Activated T-helper 2 cell treated with anti-CD3 and anti-CD28 coated beads, Interferon-gamma antibody, Interleukin-2, Interleukin-4, amounts not matched to agents 10 μg/mL and 5 μg/mL and 100 μg/mL, durations not matched to agents 14 hours and 24 hours and 36 hours (primary cell): ENCODE measurements at regions of chr3 and their contacts with region 1.

Region 1: GRCh38 chr3:187919048-187919447 is 173.8 kb upstream of the BCL6 start:
- DNase-seq: peak; percentile 71
- H3K4me3 Mint-ChIP-seq: peak overlapping the region; percentile 63
- H3K27ac Mint-ChIP-seq: peak overlapping the region; percentile 90
- H3K4me1 Mint-ChIP-seq: peaks cover 72% of the 10 kb centered on the region
- H3K27me3 Mint-ChIP-seq: peaks cover 3% of the 10 kb centered on the region

Region 2: GRCh38 chr3:187802928-187803259 is 116.2 kb before region 1 on chr3:
- intact Hi-C with region 1: loop called (anchors 1 kb)
- DNase-seq: peak; percentile 80
- H3K4me3 Mint-ChIP-seq: peak overlapping the region; percentile 54
- H3K27ac Mint-ChIP-seq: peak overlapping the region; percentile 87
- H3K4me1 Mint-ChIP-seq: peaks cover 90% of the 10 kb centered on the region
- H3K27me3 Mint-ChIP-seq: no peaks in the 10 kb centered on the region

Region 3: DNA sequence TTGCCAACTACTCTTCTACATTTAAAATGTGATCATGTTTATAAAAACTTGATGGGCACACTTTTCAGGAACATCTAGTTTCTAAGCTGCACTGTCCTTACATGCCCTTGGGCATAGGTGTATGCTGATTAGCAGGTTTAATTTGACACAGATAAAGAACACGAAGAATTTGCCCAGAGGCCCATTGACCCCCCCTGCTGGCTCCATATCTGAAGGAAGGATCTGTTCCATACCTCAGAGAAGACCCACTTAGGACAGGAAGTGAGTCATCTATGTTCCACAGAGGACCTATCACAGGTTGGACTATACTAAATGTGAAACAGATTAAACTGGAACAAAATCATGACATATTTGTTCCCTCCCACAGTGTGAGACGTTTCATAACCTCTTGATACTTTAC is 142.1 kb after region 1 on chr3:
- intact Hi-C with region 1: loop called (anchors 1 kb)
- DNase-seq: peak; percentile 59
- H3K4me3 Mint-ChIP-seq: peak overlapping the region; percentile 51
- H3K27ac Mint-ChIP-seq: peak overlapping the region; percentile 80
- H3K4me1 Mint-ChIP-seq: peaks cover 38% of the 10 kb centered on the region
- H3K27me3 Mint-ChIP-seq: no peaks in the 10 kb centered on the region

Region 4: DNA sequence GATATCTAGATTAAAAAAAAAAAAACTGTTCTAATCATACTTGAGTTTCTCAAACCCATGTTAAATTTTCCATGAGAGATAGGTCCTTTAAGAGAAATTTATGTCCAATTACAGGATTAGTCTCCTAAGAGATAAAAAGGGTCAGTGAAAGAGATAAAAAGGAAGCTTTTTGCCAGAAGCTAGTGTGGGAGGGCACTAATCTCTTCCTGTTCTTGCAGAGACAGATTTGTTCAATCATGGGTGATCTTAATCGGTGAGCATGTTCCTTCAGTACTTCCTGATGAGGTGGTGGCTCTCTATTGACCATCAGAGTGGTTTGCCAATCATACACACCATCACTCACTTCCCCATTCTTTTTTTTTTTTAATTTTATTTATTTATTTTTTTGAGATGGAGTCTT is 218.0 kb after region 1 on chr3:
- intact Hi-C with region 1: no loop called
- DNase-seq: no peak
- H3K4me3 Mint-ChIP-seq: no peak overlapping the region
- H3K27ac Mint-ChIP-seq: no peak overlapping the region
- H3K4me1 Mint-ChIP-seq: peaks cover 18% of the 10 kb centered on the region
- H3K27me3 Mint-ChIP-seq: peaks cover 11% of the 10 kb centered on the region

Region 5: DNA sequence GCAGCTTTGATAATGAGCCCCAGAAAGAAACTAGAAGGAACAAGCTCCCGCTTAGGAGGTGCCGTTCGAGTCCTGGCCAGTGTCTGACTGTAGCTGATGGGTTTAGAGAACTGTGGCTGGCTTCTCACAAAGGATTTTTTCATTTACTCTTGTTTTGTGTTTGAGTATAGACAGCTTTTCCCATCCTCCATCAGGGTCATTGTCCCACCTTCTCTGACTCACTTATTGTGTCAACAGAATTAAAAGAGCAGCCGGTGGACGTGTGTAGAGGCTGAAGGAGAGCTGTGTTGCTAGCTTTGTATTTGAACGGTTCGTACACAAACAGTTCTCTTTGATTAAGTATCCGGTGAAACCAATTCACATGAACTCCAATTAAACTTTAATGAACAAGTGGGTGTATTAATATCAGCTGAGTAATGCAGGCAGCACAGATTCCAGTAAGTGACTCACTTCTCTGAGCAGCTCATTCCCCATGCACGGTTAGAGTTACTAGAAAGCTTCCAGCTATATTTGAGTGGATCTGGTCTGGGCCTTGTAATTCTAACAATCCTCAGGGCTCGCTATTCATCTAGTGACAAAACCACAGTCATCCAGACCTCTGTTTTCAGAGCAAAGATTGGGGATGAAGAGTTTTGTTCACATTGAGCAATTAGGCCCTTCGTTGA is 375.9 kb after region 1 on chr3:
- intact Hi-C with region 1: loop called (anchors 1 kb)
- DNase-seq: no peak
- H3K4me3 Mint-ChIP-seq: no peak overlapping the region
- H3K27ac Mint-ChIP-seq: no peak overlapping the region
- H3K4me1 Mint-ChIP-seq: peaks cover 66% of the 10 kb centered on the region
- H3K27me3 Mint-ChIP-seq: no peaks in the 10 kb centered on the region

Region 6: DNA sequence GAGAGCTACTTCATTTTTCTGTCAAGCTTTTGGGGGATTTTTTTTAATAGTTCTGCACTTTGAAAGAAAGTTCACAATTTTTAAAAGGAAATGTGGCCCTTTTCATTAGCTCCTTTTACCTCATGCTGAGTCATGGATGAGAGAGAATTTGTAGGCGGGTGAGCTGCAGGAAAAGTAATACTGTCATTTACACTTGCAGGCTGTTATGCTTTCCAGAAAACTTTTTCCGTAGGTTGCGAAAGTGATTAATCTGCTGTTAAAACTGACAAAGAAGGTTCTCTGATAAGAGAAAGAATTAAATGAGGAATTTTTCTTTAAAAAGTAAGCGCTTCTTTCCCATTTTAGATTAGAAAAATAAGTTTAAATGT is 665.1 kb after region 1 on chr3:
- intact Hi-C with region 1: loop called (anchors 10 kb)
- DNase-seq: no peak
- H3K4me3 Mint-ChIP-seq: peak overlapping the region; percentile 13
- H3K27ac Mint-ChIP-seq: peak overlapping the region; percentile 86
- H3K4me1 Mint-ChIP-seq: peaks cover 30% of the 10 kb centered on the region
- H3K27me3 Mint-ChIP-seq: no peaks in the 10 kb centered on the region

Region 7: DNA sequence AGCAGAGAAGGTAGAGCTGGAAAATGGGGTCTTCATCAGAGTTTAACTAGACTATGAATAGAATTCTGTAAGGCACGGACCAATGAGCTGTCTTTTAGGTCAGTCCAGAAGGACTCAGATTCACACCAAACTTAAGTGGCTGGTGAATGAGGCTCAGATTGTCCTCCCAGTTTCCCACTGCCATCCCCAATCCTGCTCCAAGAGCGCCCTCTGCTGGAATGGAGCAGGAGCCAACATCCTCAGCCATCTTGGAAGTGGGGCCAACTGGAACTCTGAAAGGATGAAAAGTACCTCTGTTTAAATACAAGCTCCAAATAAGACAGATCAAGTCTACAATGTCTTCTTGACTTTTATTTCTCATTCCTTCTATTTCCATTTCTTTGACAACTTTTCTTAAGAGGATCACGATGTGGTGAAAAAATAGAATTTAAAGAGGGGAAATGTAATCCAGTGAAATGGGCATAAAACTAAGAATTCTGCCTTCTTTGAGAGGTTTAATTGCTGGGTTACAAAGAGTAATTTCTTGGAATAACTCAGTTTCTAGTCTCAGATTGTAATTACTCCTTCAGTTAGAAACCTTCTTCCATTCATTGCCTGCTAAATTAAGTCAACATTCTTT is 1035.7 kb after region 1 on chr3:
- intact Hi-C with region 1: loop called (anchors 10 kb)
- DNase-seq: peak; percentile 60
- H3K4me3 Mint-ChIP-seq: no peak overlapping the region
- H3K27ac Mint-ChIP-seq: no peak overlapping the region
- H3K4me1 Mint-ChIP-seq: peaks cover 32% of the 10 kb centered on the region
- H3K27me3 Mint-ChIP-seq: peaks cover 3% of the 10 kb centered on the region